ENCODE measurements at regions of chr1 and their contacts with region 1.

Region 1: DNA sequence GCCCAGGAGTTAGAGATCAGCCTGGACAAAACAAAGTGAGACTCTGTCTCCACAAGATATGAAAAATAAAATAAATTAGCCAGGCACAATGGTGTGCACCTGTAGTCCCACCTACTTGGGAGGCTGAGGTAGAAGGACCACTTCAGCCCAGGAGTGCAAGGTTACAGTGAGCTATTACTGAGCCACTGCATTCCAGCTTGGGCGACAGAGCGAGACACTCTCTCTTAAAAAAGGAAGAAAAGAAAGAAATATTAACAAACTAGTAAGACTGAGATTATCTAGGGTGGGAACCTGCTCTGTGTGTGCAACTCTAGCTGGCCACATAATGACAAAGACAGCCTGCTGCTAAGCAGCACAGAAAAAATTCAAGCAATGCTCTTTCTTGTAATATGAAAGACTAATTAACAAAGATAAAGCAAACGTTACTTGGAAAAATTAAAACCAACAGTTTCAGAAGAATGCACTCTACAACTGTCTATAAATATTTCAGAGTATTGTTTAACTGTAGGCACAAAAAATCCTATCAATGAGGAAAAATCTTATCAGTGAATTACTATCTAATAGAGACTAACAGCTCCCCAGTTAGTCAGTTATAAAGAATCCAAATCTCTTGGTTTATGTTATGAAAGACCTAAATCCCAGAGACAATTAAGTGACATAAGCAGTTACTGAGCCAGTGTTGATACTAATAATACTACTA is 74.5 kb downstream of the ENAH start:
- DNase-seq: no peak
- ATAC-seq: no peak
- H3K4me3 ChIP-seq: no peak overlapping the region
- H3K27ac ChIP-seq: no peak overlapping the region
- H3K4me1 ChIP-seq: peaks cover 0 to 3% of the 10 kb centered on the region in 2 experiments; a peak in 2 of 4 replicates
- H3K27me3 ChIP-seq: no peaks in the 10 kb centered on the region
- CTCF ChIP-seq: no peak
- POLR2A ChIP-seq: no peak
- RAD21 ChIP-seq: no peak

Region 2: DNA sequence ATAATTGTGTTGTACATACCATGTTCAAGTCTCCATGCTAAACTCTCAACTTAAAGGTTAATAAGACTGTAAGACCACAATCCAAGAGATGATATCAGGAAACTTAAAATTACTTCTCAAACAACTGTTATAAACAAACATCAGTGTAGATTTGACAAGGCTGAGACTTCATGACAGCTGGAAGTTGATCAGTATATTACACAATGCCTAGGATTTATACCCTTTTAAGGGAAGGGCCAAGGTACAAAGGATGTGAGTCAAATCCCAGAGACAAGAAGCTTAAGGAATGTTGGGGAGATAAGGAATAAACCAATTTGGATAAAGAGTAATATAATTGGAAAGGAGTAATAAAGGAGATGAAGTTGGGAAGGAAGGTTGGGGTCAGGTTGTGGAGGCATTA is 249.4 kb before region 1 on chr1:
- CTCF ChIA-PET with region 1: no interaction called
- POLR2A ChIA-PET with region 1: no interaction called
- RAD21 ChIA-PET with region 1: no interaction called
- intact Hi-C with region 1: no loop called
- DNase-seq: no peak
- ATAC-seq: no peak
- H3K4me3 ChIP-seq: no peak overlapping the region
- H3K27ac ChIP-seq: no peak overlapping the region
- H3K4me1 ChIP-seq: no peaks in the 10 kb centered on the region
- H3K27me3 ChIP-seq: no peaks in the 10 kb centered on the region
- CTCF ChIP-seq: no peak
- POLR2A ChIP-seq: no peak
- RAD21 ChIP-seq: no peak

Region 3: DNA sequence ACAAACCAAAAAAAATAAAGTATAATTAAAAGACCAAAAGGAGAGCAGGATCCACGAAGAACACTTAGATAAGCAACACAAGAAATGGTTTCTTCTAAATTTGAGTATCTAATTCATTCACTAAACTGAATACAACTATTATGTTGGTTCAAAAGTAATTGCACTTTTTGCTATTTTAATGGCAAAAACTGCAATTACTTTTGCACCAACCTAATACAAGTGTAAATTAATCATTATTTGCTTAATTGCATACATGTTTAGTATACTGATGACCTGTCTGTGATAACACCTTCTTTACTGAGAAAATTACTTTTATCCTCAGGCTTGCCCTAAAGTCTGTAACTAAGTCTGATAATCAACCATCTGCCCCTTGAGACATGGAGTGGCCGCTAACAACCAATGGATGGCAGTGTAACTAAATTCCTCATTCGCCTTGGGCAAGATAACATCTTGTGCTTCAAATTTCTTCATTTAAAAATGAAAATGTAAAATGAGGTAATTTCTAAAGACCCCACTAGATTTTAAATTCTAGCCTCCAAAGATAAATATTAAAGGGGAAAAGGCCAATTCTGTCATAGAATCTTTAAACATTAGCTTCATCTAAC is 10.7 kb before region 1 on chr1:
- CTCF ChIA-PET with region 1: no interaction called
- POLR2A ChIA-PET with region 1: no interaction called
- RAD21 ChIA-PET with region 1: no interaction called
- intact Hi-C with region 1: loop called (anchors 1 kb)
- DNase-seq: no peak
- ATAC-seq: no peak
- H3K4me3 ChIP-seq: no peak overlapping the region
- H3K27ac ChIP-seq: no peak overlapping the region
- H3K4me1 ChIP-seq: no peaks in the 10 kb centered on the region
- H3K27me3 ChIP-seq: no peaks in the 10 kb centered on the region
- CTCF ChIP-seq: peak in 2 of 3 experiments; percentile 23 to 47; a peak in 3 of 6 replicates
- POLR2A ChIP-seq: no peak
- RAD21 ChIP-seq: peak; percentile 58